AG04449 (cell line): ENCODE measurements at regions of chr17 and their contacts with region 1.

Region 1: GRCh38 chr17:39517224-39517623 is 55.9 kb downstream of the CDK12 start:
- DNase-seq: no peak
- H3K4me3 ChIP-seq: no peak overlapping the region
- CTCF ChIP-seq: no peak

Region 2: DNA sequence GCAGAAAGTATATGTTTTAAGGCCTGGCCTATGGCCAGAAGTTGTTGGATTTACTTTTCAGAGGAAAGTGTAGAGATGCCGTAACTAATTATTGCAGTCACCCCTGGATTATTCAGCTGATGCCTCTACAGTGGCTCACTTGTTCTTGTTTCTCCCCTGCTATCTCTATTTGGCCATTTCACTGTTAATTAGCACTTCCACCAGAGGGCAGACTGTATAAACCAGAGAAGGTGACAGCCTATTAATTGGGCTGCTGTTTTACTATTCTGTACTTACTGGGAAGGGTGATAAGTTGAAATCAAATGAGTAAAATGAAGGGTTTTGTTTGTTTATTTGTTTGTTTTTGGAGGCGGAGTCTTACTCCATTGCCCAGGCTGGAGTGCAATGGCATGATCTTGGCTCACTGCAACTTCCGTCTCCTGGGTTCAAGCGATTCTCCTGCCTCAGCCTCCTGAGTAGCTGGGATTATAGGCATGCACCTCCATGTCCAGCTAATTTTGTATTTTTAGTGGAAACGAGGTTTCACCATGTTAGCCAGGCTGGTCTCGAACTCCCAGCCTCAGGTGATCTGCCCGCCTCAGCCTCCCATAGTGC is 10.1 kb after region 1 on chr17:
- CTCF ChIA-PET with region 1: interaction called, 14 read pairs
- POLR2A ChIA-PET with region 1: no interaction called
- DNase-seq: no peak
- H3K4me3 ChIP-seq: no peak overlapping the region
- CTCF ChIP-seq: peak; percentile 39

Region 3: DNA sequence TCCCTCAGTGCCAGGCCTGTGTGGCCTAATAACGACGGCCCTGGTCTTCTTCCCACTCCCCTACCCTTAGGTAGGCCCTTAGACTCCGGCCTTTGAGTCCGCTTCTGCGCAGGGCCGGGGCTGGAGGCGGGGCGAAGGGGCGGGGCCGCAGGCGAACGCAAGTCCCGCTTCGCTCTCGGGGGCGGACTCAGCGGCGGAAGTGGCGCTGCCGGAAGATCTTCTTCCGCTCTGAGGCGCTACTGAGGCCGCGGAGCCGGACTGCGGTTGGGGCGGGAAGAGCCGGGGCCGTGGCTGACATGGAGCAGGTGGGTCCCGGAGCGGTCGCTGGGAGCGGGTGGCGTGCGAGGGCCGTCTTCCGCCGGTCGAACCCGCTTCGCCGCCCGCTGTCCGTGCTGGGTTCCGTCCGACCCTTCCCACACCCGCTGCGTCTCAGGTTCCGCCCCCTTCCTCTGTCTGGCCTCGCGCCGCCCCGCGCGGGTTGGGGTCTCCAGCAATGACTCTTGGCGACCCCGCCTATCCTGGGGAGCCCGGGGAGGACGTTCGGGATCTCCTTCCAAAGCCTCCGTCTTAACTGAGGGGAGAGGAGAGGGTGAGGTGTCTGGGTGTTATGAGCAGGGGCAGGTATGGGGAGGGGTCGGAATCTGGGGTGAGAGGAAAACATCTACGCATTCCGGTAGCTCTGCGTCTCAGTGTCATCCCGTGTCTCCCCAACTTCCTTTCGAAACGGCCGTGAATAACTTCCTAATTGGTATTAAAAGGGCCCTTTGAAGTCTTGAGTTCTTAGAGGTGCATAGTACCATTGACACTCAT is 119.9 kb after region 1 on chr17 and contains the start of gene STARD3:
- CTCF ChIA-PET with region 1: no interaction called
- POLR2A ChIA-PET with region 1: no interaction called
- DNase-seq: peak; percentile 33
- H3K4me3 ChIP-seq: peak within 1 kb of the TSS; percentile 93
- CTCF ChIP-seq: peak; percentile 29